IMR-90 (cell line): ENCODE measurements at regions of chr11 and their contacts with region 1.

Region 1: GRCh38 chr11:5369793-5370192 is 13.8 kb upstream of the OR51M1 start:
- DNase-seq: peak; percentile 90
- ATAC-seq: peak; percentile 71
- H3K4me3 ChIP-seq: no peak overlapping the region
- H3K27ac ChIP-seq: no peak overlapping the region
- H3K4me1 ChIP-seq: peaks cover 19% of the 10 kb centered on the region
- H3K27me3 ChIP-seq: no peaks in the 10 kb centered on the region
- CTCF ChIP-seq: peak; percentile 87
- POLR2A ChIP-seq: 0 out of 2 replicates have a peak, but pooled peaks have one; percentile 46
- RAD21 ChIP-seq: peak; percentile 96

Region 2: GRCh38 chr11:4416816-4417215 is 953.0 kb before region 1 on chr11:
- CTCF ChIA-PET with region 1: no interaction called
- POLR2A ChIA-PET with region 1: no interaction called
- dilution Hi-C with region 1: no loop called
- in situ Hi-C with region 1: no loop called
- intact Hi-C with region 1: no loop called
- DNase-seq: no peak
- ATAC-seq: no peak
- H3K4me3 ChIP-seq: no peak overlapping the region
- H3K27ac ChIP-seq: no peak overlapping the region
- H3K4me1 ChIP-seq: no peaks in the 10 kb centered on the region
- H3K27me3 ChIP-seq: no peaks in the 10 kb centered on the region
- CTCF ChIP-seq: no peak
- POLR2A ChIP-seq: no peak
- RAD21 ChIP-seq: no peak

Region 3: GRCh38 chr11:5123802-5124521 is 245.8 kb before region 1 on chr11:
- CTCF ChIA-PET with region 1: no interaction called
- POLR2A ChIA-PET with region 1: interaction called, 5 read pairs
- dilution Hi-C with region 1: no loop called
- in situ Hi-C with region 1: no loop called
- intact Hi-C with region 1: loop called (anchors 1 kb)
- DNase-seq: peak; percentile 76
- ATAC-seq: peak; percentile 100
- H3K4me3 ChIP-seq: no peak overlapping the region
- H3K27ac ChIP-seq: no peak overlapping the region
- H3K4me1 ChIP-seq: no peaks in the 10 kb centered on the region
- H3K27me3 ChIP-seq: no peaks in the 10 kb centered on the region
- CTCF ChIP-seq: peak; percentile 94
- POLR2A ChIP-seq: no peak
- RAD21 ChIP-seq: peak; percentile 91

Region 4: DNA sequence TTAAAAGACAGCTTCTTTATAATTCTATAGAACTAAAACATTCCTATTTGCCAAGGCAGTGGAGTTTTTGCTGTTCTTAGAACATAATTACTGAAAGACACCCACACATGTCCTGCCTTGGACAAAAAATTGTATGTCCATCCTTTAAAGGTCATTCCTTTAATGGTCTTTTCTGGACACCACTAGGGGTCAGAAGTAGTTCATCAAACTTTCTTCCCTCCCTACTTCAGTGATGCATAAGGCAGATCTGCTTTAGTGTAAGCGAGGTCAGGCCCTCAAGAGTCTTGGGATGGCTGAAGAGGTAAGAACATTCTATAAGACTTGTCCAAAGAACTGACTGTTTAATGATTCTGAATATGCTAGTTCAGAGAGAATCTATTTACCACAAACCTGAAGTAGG is 165.0 kb before region 1 on chr11:
- CTCF ChIA-PET with region 1: interaction called, 3 read pairs
- POLR2A ChIA-PET with region 1: interaction called, 6 read pairs
- dilution Hi-C with region 1: no loop called
- in situ Hi-C with region 1: loop called (anchors 5 kb)
- intact Hi-C with region 1: loop called (anchors 1 kb)
- DNase-seq: peak; percentile 90
- ATAC-seq: peak; percentile 94
- H3K4me3 ChIP-seq: no peak overlapping the region
- H3K27ac ChIP-seq: no peak overlapping the region
- H3K4me1 ChIP-seq: peaks cover 4% of the 10 kb centered on the region; the same call in 1 of the 2 replicates
- H3K27me3 ChIP-seq: no peaks in the 10 kb centered on the region
- CTCF ChIP-seq: peak; percentile 82
- POLR2A ChIP-seq: no peak
- RAD21 ChIP-seq: peak; percentile 91

Region 5: GRCh38 chr11:5280582-5281102 is 89.2 kb before region 1 on chr11:
- CTCF ChIA-PET with region 1: no interaction called
- POLR2A ChIA-PET with region 1: interaction called, 4 read pairs
- dilution Hi-C with region 1: no loop called
- in situ Hi-C with region 1: loop called (anchors 10 kb)
- intact Hi-C with region 1: no loop called
- DNase-seq: peak; percentile 100
- ATAC-seq: peak; percentile 99
- H3K4me3 ChIP-seq: no peak overlapping the region
- H3K27ac ChIP-seq: peak overlapping the region; percentile 85; the same call in 1 of the 2 replicates
- H3K4me1 ChIP-seq: peaks cover 14% of the 10 kb centered on the region
- H3K27me3 ChIP-seq: no peaks in the 10 kb centered on the region
- CTCF ChIP-seq: no peak
- POLR2A ChIP-seq: no peak
- RAD21 ChIP-seq: no peak

Region 6: GRCh38 chr11:5291207-5291838 is 78.5 kb before region 1 on chr11:
- CTCF ChIA-PET with region 1: no interaction called
- POLR2A ChIA-PET with region 1: interaction called, 6 read pairs
- dilution Hi-C with region 1: no loop called
- in situ Hi-C with region 1: loop called (anchors 10 kb)
- intact Hi-C with region 1: loop called (anchors 2 kb)
- DNase-seq: peak; percentile 68
- ATAC-seq: peak; percentile 36; the same call in 1 of the 2 replicates
- H3K4me3 ChIP-seq: no peak overlapping the region
- H3K27ac ChIP-seq: no peak overlapping the region
- H3K4me1 ChIP-seq: peaks cover 10% of the 10 kb centered on the region; the same call in 1 of the 2 replicates
- H3K27me3 ChIP-seq: no peaks in the 10 kb centered on the region
- CTCF ChIP-seq: peak; percentile 63
- POLR2A ChIP-seq: no peak
- RAD21 ChIP-seq: peak; percentile 74

Region 7: DNA sequence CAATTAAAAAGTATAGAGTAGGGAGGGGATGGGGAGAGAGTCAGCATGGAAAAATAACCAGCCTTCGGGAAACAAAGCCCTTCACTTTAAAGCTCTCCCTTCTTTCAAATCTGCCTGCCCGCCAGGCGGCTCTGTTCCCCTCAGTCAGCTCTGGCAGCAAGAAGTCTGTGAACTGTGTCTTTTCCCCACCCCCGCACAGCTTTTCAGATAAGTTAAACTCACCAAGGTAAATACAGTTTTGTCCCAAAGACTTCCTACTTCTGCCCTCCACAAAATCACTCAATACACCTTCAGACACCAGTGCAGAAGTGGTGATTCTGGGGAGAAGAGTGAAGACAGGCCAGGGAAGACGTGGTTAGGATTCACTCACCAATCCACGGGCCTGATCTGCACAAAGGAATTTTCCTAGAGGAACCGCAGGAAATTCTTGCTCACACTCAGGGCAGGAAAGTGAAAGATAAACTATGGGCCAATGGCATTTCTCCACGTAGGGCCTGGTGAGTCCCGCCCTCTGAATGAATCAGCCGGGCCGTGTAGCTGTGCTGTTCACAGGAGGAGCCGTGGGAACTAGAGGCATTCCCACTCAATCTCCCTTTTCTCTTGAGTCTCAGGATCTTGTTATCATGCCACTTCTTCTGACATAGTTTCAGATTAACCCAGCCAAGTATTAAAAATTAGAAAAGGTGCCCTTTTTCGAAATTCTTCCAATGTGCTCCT is 315.0 kb after region 1 on chr11 and contains the start of gene TRIM5:
- CTCF ChIA-PET with region 1: no interaction called
- POLR2A ChIA-PET with region 1: no interaction called
- dilution Hi-C with region 1: no loop called
- in situ Hi-C with region 1: no loop called
- intact Hi-C with region 1: loop called (anchors 10 kb)
- DNase-seq: peak; percentile 99
- ATAC-seq: peak; percentile 95
- H3K4me3 ChIP-seq: peak within 1 kb of the TSS; percentile 56
- H3K27ac ChIP-seq: peak within 1 kb of the TSS; percentile 67
- H3K4me1 ChIP-seq: no peaks in the 10 kb centered on the region
- H3K27me3 ChIP-seq: no peaks in the 10 kb centered on the region
- CTCF ChIP-seq: peak; percentile 58
- POLR2A ChIP-seq: peak; percentile 95
- RAD21 ChIP-seq: peak; percentile 46
- total RNA-seq, gene TRIM5: 49.1 and 58.0 TPM in 2 replicates